ENCODE measurements at regions of chr10 and their contacts with region 1.

Region 1: DNA sequence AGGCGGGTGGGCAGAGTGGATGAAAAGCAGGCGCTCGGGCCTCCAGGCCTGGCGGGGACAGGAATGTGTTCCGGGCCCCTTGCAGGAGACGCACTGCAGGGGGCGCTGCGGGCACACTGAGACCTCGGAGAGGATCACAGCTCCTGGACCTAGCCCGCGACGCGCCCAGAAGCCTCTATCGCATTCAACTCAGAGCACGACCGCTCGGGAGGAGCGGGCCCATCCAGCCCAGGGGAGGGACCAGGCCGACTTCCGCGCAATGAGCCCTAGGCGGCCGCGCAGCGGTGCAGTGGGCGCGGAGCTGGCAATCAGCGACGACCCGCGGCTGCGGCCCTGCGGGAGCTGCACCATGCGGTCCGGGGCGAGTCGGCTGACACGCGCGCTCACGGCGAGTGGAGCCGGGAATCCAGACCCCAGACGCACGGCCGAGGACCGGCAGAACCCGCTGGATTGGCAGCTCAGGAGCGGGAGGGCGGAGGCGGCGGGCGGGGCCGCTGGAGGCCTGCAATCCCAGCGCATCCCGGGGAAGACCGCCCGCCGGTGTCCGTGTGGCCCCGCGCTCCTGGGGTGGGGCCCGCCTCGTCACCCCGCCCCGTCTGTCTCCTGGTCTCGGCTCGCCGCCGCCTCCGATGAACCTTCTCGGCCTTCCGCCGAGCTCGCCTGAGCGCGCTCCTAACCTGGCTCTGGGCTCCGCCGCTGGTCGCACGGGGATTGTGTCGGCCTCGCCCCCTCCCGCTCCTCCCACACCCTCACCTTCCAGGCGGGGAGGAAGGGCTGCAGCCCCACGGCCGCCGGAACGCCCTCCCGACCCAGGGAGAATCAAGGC is 33.5 kb upstream of the GRID1 start:
- DNase-seq: peak; percentile 92
- ATAC-seq: peak; percentile 88
- H3K4me3 ChIP-seq: peak overlapping the region in 4 of 5 experiments; percentile 61 to 77 (median 63)
- H3K4me3 Mint-ChIP-seq: peak overlapping the region; percentile 93
- H3K27ac ChIP-seq: peak overlapping the region; percentile 15 to 61
- H3K27ac Mint-ChIP-seq: peak overlapping the region; percentile 61
- H3K4me1 ChIP-seq: peaks cover 13 to 20% of the 10 kb centered on the region in 2 donors
- H3K4me1 Mint-ChIP-seq: peaks cover 15% of the 10 kb centered on the region
- H3K27me3 ChIP-seq: peaks cover 0 to 7% (median 4%) of the 10 kb centered on the region in 4 experiments
- H3K27me3 Mint-ChIP-seq: peaks cover 16% of the 10 kb centered on the region
- CTCF ChIP-seq: peak; percentile 98

Region 2: DNA sequence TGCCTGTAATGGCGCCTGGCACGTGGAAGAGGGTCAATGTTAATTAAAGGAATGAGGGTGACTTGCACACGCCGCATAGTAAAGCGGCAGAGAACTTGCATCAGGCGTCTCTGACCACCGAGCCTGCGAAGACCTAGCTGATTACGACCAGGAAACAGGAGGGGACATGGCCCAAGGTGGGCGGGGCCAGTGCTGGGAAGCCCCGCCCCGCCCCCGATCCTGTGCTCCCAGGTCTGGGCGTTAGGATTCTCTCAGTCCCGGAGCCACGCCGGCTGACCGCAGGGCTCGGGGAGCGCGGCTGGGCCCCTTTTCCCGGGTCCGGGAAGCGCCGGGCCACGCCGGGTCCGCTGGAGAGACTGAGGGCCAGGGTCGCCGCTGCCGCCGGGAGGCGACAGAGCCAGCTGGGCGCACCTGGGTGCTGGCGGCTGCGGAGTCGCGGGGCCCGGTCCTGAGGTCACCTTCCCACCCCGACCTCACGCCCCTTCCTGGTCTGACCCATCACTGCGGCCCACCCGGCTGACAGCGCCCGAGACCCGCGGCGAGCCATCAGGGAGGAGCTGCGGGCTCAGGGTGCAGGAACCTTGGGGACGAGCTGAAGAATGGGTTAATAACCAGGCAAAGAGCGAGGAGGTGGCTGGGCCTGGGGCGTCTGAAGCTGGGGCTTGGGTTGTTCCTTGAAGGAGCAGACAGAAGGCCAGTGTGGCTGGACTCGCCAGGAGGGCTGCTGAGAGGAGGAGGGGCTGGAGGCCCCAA is 10.5 kb before region 1 on chr10:
- CTCF ChIA-PET with region 1: interaction called, 11 read pairs
- POLR2A ChIA-PET with region 1: no interaction called
- intact Hi-C with region 1: no loop called
- DNase-seq: peak; percentile 47
- ATAC-seq: peak; percentile 72
- H3K4me3 ChIP-seq: peak overlapping the region in 4 of 5 experiments; percentile 19 to 48 (median 42)
- H3K4me3 Mint-ChIP-seq: peak overlapping the region; percentile 87
- H3K27ac ChIP-seq: no peak overlapping the region
- H3K27ac Mint-ChIP-seq: no peak overlapping the region
- H3K4me1 ChIP-seq: peaks cover 19 to 23% of the 10 kb centered on the region in 2 donors
- H3K4me1 Mint-ChIP-seq: peaks cover 30% of the 10 kb centered on the region
- H3K27me3 ChIP-seq: peaks cover 0 to 52% (median 26%) of the 10 kb centered on the region in 4 experiments
- H3K27me3 Mint-ChIP-seq: peaks cover 66% of the 10 kb centered on the region
- CTCF ChIP-seq: no peak

Region 3: GRCh38 chr10:86439544-86439943 is 39.5 kb after region 1 on chr10:
- CTCF ChIA-PET with region 1: interaction called, 4 read pairs
- POLR2A ChIA-PET with region 1: interaction called, 4 read pairs
- intact Hi-C with region 1: loop called (anchors 5 kb)
- DNase-seq: no peak
- ATAC-seq: no peak
- H3K4me3 ChIP-seq: no peak overlapping the region
- H3K4me3 Mint-ChIP-seq: no peak overlapping the region
- H3K27ac ChIP-seq: no peak overlapping the region
- H3K27ac Mint-ChIP-seq: no peak overlapping the region
- H3K4me1 ChIP-seq: no peaks in the 10 kb centered on the region
- H3K4me1 Mint-ChIP-seq: no peaks in the 10 kb centered on the region
- H3K27me3 ChIP-seq: no peaks in the 10 kb centered on the region
- H3K27me3 Mint-ChIP-seq: no peaks in the 10 kb centered on the region
- CTCF ChIP-seq: no peak

Region 4: DNA sequence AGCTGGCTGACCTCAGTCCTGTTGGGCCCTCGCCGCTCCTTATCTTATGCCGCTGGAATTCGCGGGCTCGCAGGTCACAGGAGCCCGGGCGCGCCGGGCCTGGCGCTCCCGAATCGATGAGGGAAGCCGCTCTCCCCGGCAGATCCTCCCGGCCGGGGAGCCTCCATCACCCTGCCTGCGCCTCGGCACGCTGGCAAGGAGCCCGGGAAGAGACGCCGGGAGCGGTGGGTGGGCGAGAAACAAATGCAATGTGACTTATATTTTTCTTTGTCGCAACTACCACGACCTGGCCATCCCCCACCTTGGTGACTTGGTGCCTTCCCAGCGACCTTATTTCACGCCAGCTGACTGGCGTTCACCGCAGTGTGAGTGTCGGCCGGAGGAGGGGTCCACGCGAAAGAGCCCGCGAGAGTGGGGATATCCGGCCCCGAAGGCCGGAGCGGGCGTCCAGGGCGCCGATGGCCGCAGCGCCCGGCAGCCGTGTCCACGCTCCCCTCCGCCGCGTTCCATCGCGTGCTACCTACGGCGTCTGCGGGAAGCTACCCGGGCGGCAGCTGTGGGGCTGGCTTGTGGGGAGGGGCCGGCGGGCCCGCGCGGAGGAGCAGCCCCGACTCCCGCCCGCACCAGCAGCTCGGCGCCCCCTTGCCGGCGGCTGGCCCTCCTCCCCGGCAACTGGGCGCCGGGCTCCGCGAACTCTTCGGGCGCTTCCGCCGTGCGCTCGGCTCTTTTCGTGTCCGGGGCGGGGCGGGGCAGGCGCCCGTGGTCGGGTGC is 355.8 kb after region 1 on chr10:
- CTCF ChIA-PET with region 1: no interaction called
- POLR2A ChIA-PET with region 1: no interaction called
- intact Hi-C with region 1: loop called (anchors 5 kb)
- DNase-seq: peak; percentile 86
- ATAC-seq: peak; percentile 91
- H3K4me3 ChIP-seq: peak overlapping the region; percentile 28 to 81 (median 71)
- H3K4me3 Mint-ChIP-seq: peak overlapping the region; percentile 90
- H3K27ac ChIP-seq: no peak overlapping the region
- H3K27ac Mint-ChIP-seq: peak overlapping the region; percentile 67
- H3K4me1 ChIP-seq: peaks cover 37 to 39% of the 10 kb centered on the region in 2 donors
- H3K4me1 Mint-ChIP-seq: peaks cover 44% of the 10 kb centered on the region
- H3K27me3 ChIP-seq: peaks cover 3 to 29% (median 23%) of the 10 kb centered on the region in 4 experiments
- H3K27me3 Mint-ChIP-seq: peaks cover 26% of the 10 kb centered on the region
- CTCF ChIP-seq: no peak

Region 5: DNA sequence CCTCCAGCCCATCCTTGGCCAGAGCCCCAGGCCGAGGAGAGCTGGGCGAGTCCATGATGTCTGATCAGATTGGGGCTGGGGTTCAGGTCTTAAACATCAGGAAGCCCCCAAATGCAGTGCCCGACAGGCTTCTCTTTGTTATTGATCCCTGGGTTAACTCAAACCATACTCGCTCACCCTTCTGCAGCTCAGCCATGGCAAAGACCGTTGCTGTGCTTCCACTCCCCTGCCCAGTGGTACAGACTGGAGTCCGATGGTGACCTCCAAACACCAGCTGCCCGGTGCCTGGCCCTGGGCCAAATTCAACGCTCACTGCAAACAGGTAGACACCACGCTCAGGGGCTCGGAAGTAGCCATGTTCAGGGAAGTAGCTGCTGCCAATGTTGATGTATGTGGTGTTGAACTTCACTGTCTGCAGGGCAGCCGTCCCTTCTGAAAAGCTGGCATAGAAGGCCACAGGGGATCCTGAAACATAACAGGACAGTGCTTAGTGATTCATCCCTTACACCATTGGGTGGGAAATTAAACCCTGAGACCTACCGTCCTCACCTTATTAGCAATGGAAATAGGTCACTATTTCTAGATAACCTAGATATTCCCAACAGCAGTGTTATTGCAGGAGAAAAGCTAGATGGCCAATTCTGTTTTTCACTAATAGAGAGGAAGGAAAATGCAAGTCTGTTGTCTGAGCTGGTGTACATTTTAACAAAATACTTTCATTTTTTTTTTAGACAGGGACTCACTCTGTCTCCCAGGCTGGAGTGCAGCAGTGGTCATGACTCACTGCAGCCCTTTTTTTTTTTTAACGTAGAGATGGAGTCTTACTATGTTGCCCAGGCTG is 536.8 kb after region 1 on chr10:
- CTCF ChIA-PET with region 1: no interaction called
- POLR2A ChIA-PET with region 1: interaction called, 14 read pairs
- intact Hi-C with region 1: no loop called
- DNase-seq: no peak
- ATAC-seq: no peak
- H3K4me3 ChIP-seq: no peak overlapping the region
- H3K4me3 Mint-ChIP-seq: no peak overlapping the region
- H3K27ac ChIP-seq: no peak overlapping the region
- H3K27ac Mint-ChIP-seq: no peak overlapping the region
- H3K4me1 ChIP-seq: peaks cover 0 to 4% of the 10 kb centered on the region in 2 donors
- H3K4me1 Mint-ChIP-seq: no peaks in the 10 kb centered on the region
- H3K27me3 ChIP-seq: no peaks in the 10 kb centered on the region
- H3K27me3 Mint-ChIP-seq: no peaks in the 10 kb centered on the region
- CTCF ChIP-seq: no peak